A549 (cell line): ENCODE measurements at regions of chr1 and their contacts with region 1.

Region 1: DNA sequence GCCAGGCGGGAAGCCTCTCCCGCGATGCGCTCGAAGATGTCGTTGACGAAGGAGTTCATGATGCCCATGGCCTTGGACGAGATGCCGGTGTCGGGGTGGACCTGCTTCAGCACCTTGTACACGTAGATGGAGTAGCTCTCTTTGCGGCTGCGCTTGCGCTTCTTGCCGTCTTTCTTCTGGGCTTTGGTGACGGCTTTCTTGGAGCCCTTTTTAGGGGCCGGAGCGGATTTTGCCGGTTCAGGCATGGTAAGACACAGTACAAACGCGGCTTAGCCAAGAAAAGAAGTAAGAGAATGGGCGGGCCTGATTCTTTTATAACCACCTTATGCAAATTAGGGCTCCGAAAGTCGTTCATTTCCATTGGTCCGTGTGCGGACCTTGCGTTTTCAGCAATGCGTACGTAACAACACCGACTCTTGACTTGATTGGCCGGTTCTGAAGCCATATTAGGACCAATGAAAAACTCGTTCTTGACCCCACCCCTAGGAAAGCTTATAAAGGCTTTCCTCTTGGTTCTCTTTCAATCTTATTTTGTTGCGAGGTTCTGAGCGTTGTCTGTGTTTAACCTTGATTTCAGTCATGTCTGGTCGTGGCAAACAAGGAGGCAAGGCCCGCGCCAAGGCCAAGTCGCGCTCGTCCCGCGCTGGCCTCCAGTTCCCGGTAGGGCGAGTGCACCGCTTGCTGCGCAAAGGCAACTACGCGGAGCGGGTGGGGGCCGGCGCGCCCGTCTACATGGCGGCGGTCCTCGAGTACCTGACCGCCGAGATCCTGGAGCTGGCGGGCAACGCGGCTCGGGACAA is 12.8 kb upstream of the BOLA1 start:
- DNase-seq: peak; percentile 93 to 99
- ATAC-seq: peak; percentile 59 to 74
- H3K4me3 ChIP-seq: peak overlapping the region; percentile 54
- H3K27ac ChIP-seq: peak overlapping the region; percentile 91 to 96
- H3K4me1 ChIP-seq: peaks cover 22% of the 10 kb centered on the region
- CTCF ChIP-seq: no peak
- EP300 ChIP-seq: no peak
- POLR2A ChIP-seq: peak; percentile 95
- RAD21 ChIP-seq: 0 out of 5 replicates have a peak, but pooled peaks of 1 of the 2 experiments have one; percentile 6

Region 2: DNA sequence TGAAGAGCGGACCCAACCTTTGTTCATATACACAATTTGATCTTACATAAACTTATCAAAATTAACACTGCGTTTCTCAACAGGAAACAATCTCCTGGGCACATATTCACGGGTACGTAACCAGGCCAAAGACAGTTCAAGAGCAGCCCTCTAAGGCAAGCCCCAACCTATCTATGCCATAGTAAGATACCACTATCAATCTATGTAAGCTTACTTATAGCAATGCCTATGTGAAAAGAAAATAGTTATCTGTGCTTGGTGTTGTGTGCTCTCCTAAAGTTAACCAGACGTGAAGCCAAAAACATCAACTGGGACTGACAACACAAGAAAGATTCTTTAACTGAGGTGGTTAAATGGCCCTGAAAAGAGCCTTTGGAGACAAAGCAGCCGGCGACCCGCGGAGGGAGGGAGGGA is 36.6 kb before region 1 on chr1:
- CTCF ChIA-PET with region 1: interaction called, 8 read pairs
- POLR2A ChIA-PET with region 1: interaction called, 34 read pairs
- DNase-seq: no peak
- ATAC-seq: no peak
- H3K4me3 ChIP-seq: peak overlapping the region; percentile 60
- H3K27ac ChIP-seq: peak overlapping the region; percentile 73 to 88
- H3K4me1 ChIP-seq: peaks cover 43% of the 10 kb centered on the region
- CTCF ChIP-seq: no peak
- EP300 ChIP-seq: no peak
- POLR2A ChIP-seq: no peak
- RAD21 ChIP-seq: no peak

Region 3: GRCh38 chr1:149906570-149907075 is 20.0 kb after region 1 on chr1:
- CTCF ChIA-PET with region 1: interaction called, 11 read pairs
- POLR2A ChIA-PET with region 1: interaction called, 4 read pairs
- DNase-seq: no peak
- ATAC-seq: no peak
- H3K4me3 ChIP-seq: no peak overlapping the region
- H3K27ac ChIP-seq: no peak overlapping the region
- H3K4me1 ChIP-seq: no peaks in the 10 kb centered on the region
- CTCF ChIP-seq: no peak
- EP300 ChIP-seq: no peak
- POLR2A ChIP-seq: no peak
- RAD21 ChIP-seq: no peak

Region 4: GRCh38 chr1:149937060-149937705 is 50.6 kb after region 1 on chr1:
- CTCF ChIA-PET with region 1: interaction called, 17 read pairs
- POLR2A ChIA-PET with region 1: interaction called, 70 read pairs
- DNase-seq: peak; percentile 83 to 87
- ATAC-seq: peak; percentile 61 to 71
- H3K4me3 ChIP-seq: peak overlapping the region; percentile 65
- H3K27ac ChIP-seq: peak overlapping the region; percentile 94
- H3K4me1 ChIP-seq: peaks cover 44% of the 10 kb centered on the region
- CTCF ChIP-seq: no peak
- EP300 ChIP-seq: no peak
- POLR2A ChIP-seq: no peak
- RAD21 ChIP-seq: no peak

Region 5: GRCh38 chr1:149993764-149994163 is 107.2 kb after region 1 on chr1:
- CTCF ChIA-PET with region 1: no interaction called
- POLR2A ChIA-PET with region 1: no interaction called
- DNase-seq: no peak
- ATAC-seq: no peak
- H3K4me3 ChIP-seq: no peak overlapping the region
- H3K27ac ChIP-seq: no peak overlapping the region
- H3K4me1 ChIP-seq: peaks cover 9% of the 10 kb centered on the region; the same call in 2 of the 3 replicates
- CTCF ChIP-seq: no peak
- EP300 ChIP-seq: no peak
- POLR2A ChIP-seq: no peak
- RAD21 ChIP-seq: no peak

Region 6: DNA sequence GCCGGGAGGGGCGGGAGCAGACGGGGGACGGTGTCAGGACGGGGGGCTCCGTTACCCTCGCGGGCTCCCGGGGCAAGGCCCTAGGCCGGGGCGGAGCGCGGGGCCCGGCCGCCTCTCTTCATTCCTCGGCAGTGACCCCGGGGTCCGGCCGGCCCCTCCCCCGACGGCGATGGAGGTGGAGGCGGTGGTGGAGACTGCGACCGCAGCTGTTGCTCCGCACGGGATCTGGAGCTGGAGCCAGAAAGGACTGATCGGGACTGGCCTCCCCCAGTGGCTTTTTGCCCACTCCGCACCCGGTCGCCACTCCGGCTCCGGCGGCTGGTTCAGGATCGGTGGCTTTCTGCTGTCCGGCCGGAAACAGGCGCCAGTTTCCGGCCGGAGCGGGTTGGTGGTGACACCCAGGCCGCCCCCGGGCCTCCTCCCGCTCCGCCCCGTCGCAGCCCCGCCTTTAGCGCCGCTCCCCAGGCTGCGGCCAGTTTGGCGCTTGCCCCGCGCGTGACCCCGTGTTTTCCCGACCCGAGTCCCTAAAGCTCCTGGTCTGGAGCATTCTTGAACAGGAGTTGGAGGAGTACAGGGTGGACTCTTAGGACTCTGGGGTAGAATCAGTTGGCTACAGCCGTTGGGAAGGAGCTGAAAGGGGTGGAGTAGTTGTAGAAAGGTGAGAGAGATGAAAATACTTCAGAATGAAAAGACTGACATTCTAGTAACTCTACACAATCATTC is 124.0 kb after region 1 on chr1 and contains the start of gene OTUD7B:
- CTCF ChIA-PET with region 1: interaction called, 11 read pairs
- POLR2A ChIA-PET with region 1: interaction called, 24 read pairs
- DNase-seq: peak; percentile 69 to 89
- ATAC-seq: peak; percentile 93 to 94
- H3K4me3 ChIP-seq: peak within 1 kb of the TSS; percentile 59
- H3K27ac ChIP-seq: peak within 1 kb of the TSS; percentile 88 to 96
- H3K4me1 ChIP-seq: peaks cover 29% of the 10 kb centered on the region
- CTCF ChIP-seq: no peak; the same call in 2 of the 3 replicates
- EP300 ChIP-seq: no peak
- POLR2A ChIP-seq: peak; percentile 72
- RAD21 ChIP-seq: peak in 1 of 2 experiments; percentile 25; a peak in 2 of 5 replicates
- polyA plus RNA-seq, gene OTUD7B: 12.1 and 13.0 TPM in 2 replicates